CD14-positive monocyte (primary cell): ENCODE measurements at regions of chr4 and their contacts with region 1.

Region 1: DNA sequence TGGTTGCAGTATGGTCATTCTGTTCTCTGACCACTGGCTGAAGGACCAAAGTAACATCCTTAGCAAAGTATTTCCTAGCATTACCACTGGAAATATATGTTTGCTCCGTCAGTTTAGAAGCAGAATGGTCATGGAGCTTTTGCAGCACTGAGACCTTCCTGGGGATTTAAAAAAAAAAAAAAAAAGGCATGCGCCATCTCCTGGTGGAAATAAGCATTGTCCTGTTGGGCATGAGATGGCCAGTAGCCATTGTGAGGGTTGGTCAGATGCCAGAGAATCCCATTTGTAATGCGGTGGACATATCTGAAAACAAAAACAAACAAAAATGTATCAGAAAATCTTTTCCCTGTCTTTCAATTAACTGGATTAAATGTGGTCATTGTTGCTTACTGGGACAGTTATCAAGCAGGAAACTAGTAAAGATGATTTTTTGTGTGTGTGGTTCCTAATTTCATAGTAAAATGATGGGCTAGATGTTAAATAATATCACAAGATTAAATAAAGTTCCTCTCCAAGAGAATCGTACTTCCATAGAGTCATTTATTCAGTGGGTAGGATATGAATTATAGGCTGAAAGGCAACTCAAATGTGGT is 139.6 kb downstream of the SOWAHB start:
- DNase-seq: peak in 2 of 3 donors; percentile 2 to 15
- H3K4me3 ChIP-seq: no peak overlapping the region
- H3K4me3 Mint-ChIP-seq: no peak overlapping the region
- H3K27ac ChIP-seq: no peak overlapping the region
- H3K27ac Mint-ChIP-seq: no peak overlapping the region
- H3K4me1 ChIP-seq: no peaks in the 10 kb centered on the region
- H3K4me1 Mint-ChIP-seq: no peaks in the 10 kb centered on the region
- H3K27me3 ChIP-seq: no peaks in the 10 kb centered on the region
- H3K27me3 Mint-ChIP-seq: peaks cover 2 to 5% (median 4%) of the 10 kb centered on the region in 3 donors
- CTCF ChIP-seq: peak; percentile 84

Region 2: DNA sequence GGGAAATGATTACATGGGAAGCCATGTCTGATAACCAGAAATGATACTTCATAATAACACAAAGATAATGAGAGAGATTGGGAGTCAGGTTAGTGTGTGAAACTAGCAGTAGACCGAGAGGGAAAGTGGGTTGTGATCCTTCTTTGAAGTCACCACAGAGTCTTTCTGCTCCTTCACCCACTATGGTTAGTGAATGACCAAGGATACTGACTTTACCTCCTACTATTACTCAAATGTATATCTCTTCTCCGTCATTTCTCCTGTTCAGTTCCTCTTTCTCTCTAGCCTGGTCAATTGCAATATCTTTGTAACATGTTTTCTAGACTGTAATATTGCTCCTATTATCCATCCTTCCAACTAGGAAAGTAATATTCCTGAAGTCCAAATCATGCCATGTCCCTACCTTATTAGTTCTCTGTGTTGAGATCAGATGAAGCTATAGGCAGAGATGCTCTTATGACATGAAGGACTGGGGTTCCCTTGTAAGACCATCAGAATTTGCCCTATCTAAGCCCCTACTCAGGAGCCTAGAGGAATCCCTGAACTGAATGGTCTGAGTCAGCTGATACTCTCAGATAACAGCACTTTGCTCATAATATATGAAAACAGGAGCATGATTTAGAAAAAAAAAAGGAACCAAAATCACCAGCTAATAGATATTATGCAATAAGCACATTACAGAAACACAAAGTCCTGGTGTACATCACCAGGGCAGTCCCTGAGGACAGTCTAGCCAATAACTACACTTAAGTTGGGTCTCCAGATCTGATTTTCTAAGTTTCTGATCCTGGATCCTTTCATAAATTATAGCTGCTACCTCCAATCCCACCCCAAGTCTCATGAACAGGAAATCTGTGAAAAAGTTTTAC is 242.2 kb before region 1 on chr4:
- intact Hi-C with region 1: loop called (anchors 5 kb)
- DNase-seq: peak; percentile 21 to 51 (median 51)
- H3K4me3 ChIP-seq: peak overlapping the region in 1 of 3 experiments; percentile 5
- H3K4me3 Mint-ChIP-seq: peak overlapping the region in 1 of 2 donors; percentile 69
- H3K27ac ChIP-seq: peak overlapping the region in 1 of 2 donors; percentile 65
- H3K27ac Mint-ChIP-seq: peak overlapping the region; percentile 53 to 90 (median 76)
- H3K4me1 ChIP-seq: peaks cover 11 to 12% of the 10 kb centered on the region in 2 donors
- H3K4me1 Mint-ChIP-seq: peaks cover 21% of the 10 kb centered on the region
- H3K27me3 ChIP-seq: no peaks in the 10 kb centered on the region
- H3K27me3 Mint-ChIP-seq: peaks cover 0 to 2% (median 0%) of the 10 kb centered on the region in 3 donors
- CTCF ChIP-seq: no peak

Region 3: DNA sequence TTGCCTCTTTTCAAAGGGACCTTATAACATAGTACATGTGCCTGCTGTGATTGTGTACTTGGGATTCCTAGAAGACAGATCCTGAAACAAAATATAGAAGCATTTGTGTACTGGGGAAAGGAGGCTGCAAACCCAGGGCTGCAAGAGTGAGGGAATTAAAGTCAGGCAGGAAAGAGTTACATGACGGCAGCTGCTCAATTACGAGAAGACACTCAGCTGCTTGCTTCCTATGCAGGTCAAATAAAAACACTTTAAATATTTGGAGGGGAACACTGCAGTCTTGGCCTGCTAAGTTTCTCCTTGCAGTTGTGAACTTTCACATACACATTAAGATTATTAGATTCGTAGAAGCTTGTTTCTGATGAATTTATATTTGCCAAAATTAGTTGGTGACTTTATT is 655.4 kb after region 1 on chr4:
- intact Hi-C with region 1: no loop called
- DNase-seq: no peak
- H3K4me3 ChIP-seq: no peak overlapping the region
- H3K4me3 Mint-ChIP-seq: no peak overlapping the region
- H3K27ac ChIP-seq: no peak overlapping the region
- H3K27ac Mint-ChIP-seq: no peak overlapping the region
- H3K4me1 ChIP-seq: no peaks in the 10 kb centered on the region
- H3K4me1 Mint-ChIP-seq: no peaks in the 10 kb centered on the region
- H3K27me3 ChIP-seq: no peaks in the 10 kb centered on the region
- H3K27me3 Mint-ChIP-seq: peaks cover 0 to 2% (median 1%) of the 10 kb centered on the region in 3 donors
- CTCF ChIP-seq: no peak